WTC11 (cell line): ENCODE measurements at regions of chr3 and their contacts with region 1.

Region 1: DNA sequence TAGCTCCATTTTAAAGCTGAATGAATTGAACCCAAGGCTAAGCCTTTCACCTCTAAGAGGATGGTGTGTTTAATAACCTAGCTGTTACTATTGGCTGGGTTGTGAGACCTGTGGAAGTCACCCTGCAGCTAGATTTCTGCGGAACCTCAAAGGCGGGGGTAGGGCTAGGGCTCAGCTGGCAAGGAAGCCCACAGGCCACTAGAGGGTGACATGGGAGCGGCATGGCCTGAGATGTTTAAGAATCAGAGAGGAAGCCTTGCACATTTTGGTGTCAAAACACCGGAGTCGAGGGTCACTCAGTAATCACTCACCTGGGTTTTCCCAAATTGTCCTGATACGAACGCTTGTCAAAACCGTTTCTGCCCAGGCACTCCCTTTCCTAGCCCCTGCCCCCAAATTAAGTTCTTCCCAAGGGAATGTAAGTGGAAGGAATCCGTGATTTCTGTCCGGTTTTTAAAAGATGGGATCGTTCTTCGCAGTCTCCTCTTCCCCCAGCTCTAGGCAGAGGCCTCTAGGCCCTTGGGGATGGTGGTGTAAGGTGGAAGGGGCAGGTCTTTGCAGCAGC is 3.8 kb upstream of the ACAD9 start:
- DNase-seq: peak; percentile 71
- ATAC-seq: peak; percentile 79
- H3K4me3 Mint-ChIP-seq: no peak overlapping the region
- H3K27ac Mint-ChIP-seq: no peak overlapping the region; the same call in 1 of the 2 replicates
- H3K4me1 Mint-ChIP-seq: peaks cover 25% of the 10 kb centered on the region
- H3K27me3 Mint-ChIP-seq: peaks cover 11% of the 10 kb centered on the region
- CTCF ChIP-seq: no peak; the same call in 1 of the 2 replicates

Region 2: DNA sequence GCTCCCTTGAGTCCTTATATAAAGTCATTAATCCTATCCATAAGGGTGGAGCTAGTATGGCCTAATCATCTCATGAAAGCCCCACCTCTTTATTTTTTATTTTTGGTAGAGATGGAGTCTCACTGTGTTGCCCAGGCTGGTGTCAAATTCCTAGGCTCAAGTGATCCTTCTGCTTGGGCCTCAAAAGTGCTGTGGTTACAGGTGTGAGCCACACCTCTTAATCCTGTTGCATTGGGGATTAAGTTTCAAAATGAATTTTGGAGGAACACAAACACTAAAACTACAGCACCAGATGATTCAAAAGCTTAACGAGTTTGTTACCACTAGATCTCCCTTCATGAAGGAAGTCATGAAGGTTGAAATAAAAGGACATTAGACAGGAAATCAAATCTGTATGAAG is 121.9 kb before region 1 on chr3:
- CTCF ChIA-PET with region 1: no interaction called
- POLR2A ChIA-PET with region 1: no interaction called
- DNase-seq: no peak
- ATAC-seq: no peak
- H3K4me3 Mint-ChIP-seq: no peak overlapping the region
- H3K27ac Mint-ChIP-seq: no peak overlapping the region
- H3K4me1 Mint-ChIP-seq: peaks cover 17% of the 10 kb centered on the region
- H3K27me3 Mint-ChIP-seq: no peaks in the 10 kb centered on the region
- CTCF ChIP-seq: no peak

Region 3: DNA sequence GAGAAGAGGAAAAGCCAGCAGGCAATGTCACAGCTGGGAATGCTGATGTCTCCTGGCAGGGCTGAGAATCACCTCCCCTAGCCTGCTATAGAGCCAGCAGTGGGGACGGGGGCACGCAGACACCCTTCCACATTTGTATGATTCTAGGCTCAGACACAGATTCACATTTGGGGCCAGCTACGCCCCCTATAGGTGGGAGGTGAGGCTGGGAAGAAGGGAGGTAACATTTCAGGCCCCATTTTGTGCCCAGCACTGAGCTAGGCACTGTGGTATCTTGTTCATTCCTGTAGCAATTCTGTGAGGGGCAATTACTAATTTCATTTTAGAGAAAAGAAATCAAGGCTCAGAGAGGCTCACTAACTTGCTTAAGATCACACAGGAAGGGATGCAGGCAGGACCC is 12.1 kb before region 1 on chr3:
- CTCF ChIA-PET with region 1: interaction called, 11 read pairs
- POLR2A ChIA-PET with region 1: interaction called, 3 read pairs
- DNase-seq: no peak
- ATAC-seq: no peak; the same call in 1 of the 2 replicates
- H3K4me3 Mint-ChIP-seq: no peak overlapping the region
- H3K27ac Mint-ChIP-seq: no peak overlapping the region; the same call in 1 of the 2 replicates
- H3K4me1 Mint-ChIP-seq: peaks cover 15% of the 10 kb centered on the region
- H3K27me3 Mint-ChIP-seq: peaks cover 15% of the 10 kb centered on the region
- CTCF ChIP-seq: peak; percentile 59

Region 4: GRCh38 chr3:129034648-129035047 is 159.0 kb after region 1 on chr3:
- CTCF ChIA-PET with region 1: no interaction called
- POLR2A ChIA-PET with region 1: no interaction called
- DNase-seq: no peak
- ATAC-seq: peak; percentile 72
- H3K4me3 Mint-ChIP-seq: no peak overlapping the region
- H3K27ac Mint-ChIP-seq: no peak overlapping the region
- H3K4me1 Mint-ChIP-seq: peaks cover 3% of the 10 kb centered on the region; the same call in 1 of the 2 replicates
- H3K27me3 Mint-ChIP-seq: peaks cover 7% of the 10 kb centered on the region; the same call in 1 of the 2 replicates
- CTCF ChIP-seq: no peak